ENCODE measurements at regions of chr11 and their contacts with region 1.

Region 1: GRCh38 chr11:4072668-4073285 is 21.8 kb upstream of the RRM1 start:
- DNase-seq: peak; percentile 51
- H3K4me3 Mint-ChIP-seq: no peak overlapping the region
- H3K27ac Mint-ChIP-seq: peak overlapping the region; percentile 5
- H3K4me1 Mint-ChIP-seq: peaks cover 33% of the 10 kb centered on the region
- H3K27me3 Mint-ChIP-seq: no peaks in the 10 kb centered on the region

Region 2: GRCh38 chr11:3781423-3781822 is 291.4 kb before region 1 on chr11:
- CTCF ChIA-PET with region 1: interaction called, 10 read pairs
- POLR2A ChIA-PET with region 1: no interaction called
- DNase-seq: no peak
- H3K4me3 Mint-ChIP-seq: no peak overlapping the region
- H3K27ac Mint-ChIP-seq: peak overlapping the region; percentile 12
- H3K4me1 Mint-ChIP-seq: peaks cover 50% of the 10 kb centered on the region
- H3K27me3 Mint-ChIP-seq: no peaks in the 10 kb centered on the region

Region 3: DNA sequence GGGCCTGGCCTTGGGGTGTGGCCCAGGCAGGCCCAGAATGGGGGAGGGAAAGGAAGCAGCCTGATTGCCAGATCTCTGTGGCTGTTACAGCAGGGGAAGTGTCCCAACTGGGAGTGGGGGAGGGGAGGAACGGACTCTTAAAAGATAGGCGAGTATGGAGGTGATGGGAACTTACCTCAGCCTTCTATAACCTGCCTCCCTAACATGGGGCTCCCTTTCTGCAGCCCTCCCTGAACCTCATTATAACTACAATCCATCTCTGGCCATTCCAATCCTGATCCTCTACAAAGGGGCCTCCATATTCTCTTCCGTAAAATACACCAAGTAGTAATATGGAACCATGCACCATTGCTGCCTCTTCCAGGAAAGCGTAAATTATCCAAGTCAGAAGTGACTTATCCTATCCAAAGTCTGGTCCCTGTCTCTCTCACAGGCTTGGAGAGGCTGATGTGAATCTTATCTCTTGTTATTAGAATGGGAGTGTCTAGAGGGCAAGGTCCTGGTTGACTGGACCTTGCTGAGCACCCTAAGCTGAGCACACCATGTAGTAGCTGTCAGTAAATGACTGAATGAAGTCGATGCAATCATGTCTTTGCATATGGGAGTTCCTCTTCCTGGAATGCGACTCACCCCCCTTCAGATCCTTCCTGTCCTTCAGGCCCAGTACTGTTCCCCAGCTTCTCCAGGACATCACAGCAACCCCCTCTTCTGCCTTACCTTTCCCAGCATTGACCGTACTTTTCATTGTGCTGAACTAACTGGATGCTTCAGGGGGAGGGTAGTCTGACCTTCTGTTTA is 237.9 kb before region 1 on chr11:
- CTCF ChIA-PET with region 1: interaction called, 554 read pairs
- POLR2A ChIA-PET with region 1: interaction called, 8 read pairs
- DNase-seq: peak; percentile 30
- H3K4me3 Mint-ChIP-seq: peak overlapping the region; percentile 64
- H3K27ac Mint-ChIP-seq: peak overlapping the region; percentile 62
- H3K4me1 Mint-ChIP-seq: peaks cover 93% of the 10 kb centered on the region
- H3K27me3 Mint-ChIP-seq: no peaks in the 10 kb centered on the region

Region 4: DNA sequence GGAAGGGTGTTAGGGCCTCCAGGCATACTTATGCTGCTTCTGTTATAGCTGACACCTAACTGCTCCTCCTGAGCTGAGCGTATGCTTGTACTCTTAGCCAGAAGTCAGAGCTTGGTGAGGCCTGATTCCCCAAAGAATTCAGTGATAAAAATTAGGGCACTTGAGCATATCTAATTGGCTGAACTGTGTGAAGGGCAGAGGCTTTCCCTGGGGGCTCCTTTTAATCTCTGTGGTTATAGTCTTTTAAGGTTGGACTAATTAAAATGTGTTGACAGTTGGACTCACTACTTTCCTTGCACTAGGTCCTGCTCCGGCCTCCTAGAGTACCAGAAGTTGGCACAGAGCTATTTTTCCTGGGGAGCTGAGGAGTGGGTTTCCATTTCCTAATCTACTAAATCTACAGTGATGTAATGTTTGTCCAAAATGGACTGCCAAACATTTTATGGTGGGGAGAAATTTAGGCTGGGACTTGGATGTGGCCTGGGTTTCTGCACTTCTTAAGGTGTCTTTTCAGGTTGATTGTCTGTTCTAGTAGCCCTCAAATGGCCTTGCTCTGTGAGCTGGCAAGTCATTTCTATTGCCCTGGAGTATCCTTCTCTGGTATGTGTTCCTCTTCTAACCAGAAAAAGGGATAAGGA is 198.9 kb before region 1 on chr11:
- CTCF ChIA-PET with region 1: interaction called, 16 read pairs
- POLR2A ChIA-PET with region 1: no interaction called
- DNase-seq: no peak
- H3K4me3 Mint-ChIP-seq: no peak overlapping the region
- H3K27ac Mint-ChIP-seq: no peak overlapping the region
- H3K4me1 Mint-ChIP-seq: peaks cover 62% of the 10 kb centered on the region
- H3K27me3 Mint-ChIP-seq: no peaks in the 10 kb centered on the region

Region 5: DNA sequence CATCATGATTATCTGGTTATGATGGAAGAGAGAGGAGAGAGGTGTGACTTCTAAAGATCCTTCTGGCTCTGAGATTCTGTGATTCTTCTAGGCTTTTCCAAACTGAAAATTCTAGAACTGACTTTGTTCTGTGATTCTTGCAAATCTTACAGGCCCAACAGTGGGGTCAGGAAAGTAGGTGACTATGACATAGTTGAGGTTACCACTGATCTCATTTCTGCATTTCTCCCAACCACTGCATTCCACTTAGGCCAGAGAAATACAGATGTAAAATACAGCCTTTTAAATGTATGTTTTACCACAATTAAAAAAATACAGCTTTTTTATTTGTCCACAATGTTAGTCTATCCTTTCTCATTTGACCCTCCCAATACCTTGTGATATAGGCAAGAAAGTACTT is 133.6 kb before region 1 on chr11:
- CTCF ChIA-PET with region 1: interaction called, 25 read pairs
- POLR2A ChIA-PET with region 1: no interaction called
- DNase-seq: no peak
- H3K4me3 Mint-ChIP-seq: no peak overlapping the region
- H3K27ac Mint-ChIP-seq: no peak overlapping the region
- H3K4me1 Mint-ChIP-seq: peaks cover 70% of the 10 kb centered on the region
- H3K27me3 Mint-ChIP-seq: no peaks in the 10 kb centered on the region

Region 6: GRCh38 chr11:4060182-4060923 is 12.4 kb before region 1 on chr11:
- CTCF ChIA-PET with region 1: interaction called, 20 read pairs
- POLR2A ChIA-PET with region 1: no interaction called
- DNase-seq: no peak
- H3K4me3 Mint-ChIP-seq: no peak overlapping the region
- H3K27ac Mint-ChIP-seq: no peak overlapping the region
- H3K4me1 Mint-ChIP-seq: peaks cover 25% of the 10 kb centered on the region
- H3K27me3 Mint-ChIP-seq: no peaks in the 10 kb centered on the region

Region 7: DNA sequence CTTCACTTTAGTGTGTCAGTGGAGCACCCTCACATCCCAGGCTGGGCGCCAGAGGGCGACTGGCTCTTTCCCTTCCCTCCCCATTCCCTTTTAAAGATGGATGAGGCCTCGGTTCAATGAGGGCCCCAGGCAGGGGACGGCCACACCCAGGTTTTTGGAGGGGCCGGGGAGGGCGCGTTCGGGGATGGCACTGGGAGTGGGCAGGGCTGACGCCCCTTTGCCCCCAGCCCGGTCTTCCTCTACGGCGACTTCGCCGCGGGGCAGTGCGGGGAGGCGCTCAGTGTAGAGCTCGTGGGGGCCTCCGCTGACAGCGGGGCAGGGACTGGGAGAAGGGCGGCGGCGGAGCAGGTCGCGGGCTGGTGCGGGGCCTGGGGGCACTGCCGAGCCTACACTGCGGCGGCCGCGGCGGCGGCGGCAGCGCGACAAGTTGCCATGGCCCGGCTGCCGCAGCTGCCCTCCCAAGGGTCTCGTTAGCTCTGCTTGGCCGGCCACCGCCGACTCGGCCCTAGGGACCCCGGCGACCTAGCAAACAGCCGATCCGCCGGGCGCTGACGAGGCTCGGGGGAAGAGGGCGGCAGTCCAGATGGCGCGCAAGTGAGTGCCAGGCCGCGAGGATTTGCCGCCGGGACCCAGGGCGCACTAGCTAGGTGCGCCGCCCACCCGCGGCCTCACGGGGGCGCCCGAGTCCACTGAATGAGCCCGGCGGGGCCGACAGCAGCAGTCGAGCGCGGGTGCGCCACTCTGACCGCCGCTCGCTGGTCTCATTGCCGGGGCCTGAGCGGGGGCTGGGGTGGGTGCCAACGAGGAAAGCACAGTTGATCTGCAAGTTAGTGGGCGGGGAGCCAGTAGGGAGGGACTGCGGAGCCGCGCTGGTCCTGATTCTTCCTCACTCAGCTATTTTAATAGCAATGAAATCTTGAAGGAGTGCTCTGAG is 114.5 kb after region 1 on chr11:
- CTCF ChIA-PET with region 1: no interaction called
- POLR2A ChIA-PET with region 1: no interaction called
- DNase-seq: peak; percentile 89
- H3K4me3 Mint-ChIP-seq: peak overlapping the region; percentile 77
- H3K27ac Mint-ChIP-seq: no peak overlapping the region
- H3K4me1 Mint-ChIP-seq: peaks cover 26% of the 10 kb centered on the region
- H3K27me3 Mint-ChIP-seq: peaks cover 6% of the 10 kb centered on the region

Measured in activated CD4-positive, alpha-beta memory T cell treated with anti-CD3 and anti-CD28 coated beads, Interleukin-2, amount 10 ng/mL, durations not matched to agents 7 days and 5 days (primary cell).